ENCODE measurements at regions of chr7 and their contacts with region 1.

Region 1: GRCh38 chr7:151232091-151232916 is at the start of gene CHPF2:
- DNase-seq: peak; percentile 87 to 97 (median 94)
- H3K4me3 ChIP-seq: peak within 1 kb of the TSS; percentile 50 to 100 (median 94)
- H3K27ac ChIP-seq: peak within 1 kb of the TSS; percentile 36 to 95 (median 86)
- H3K27me3 ChIP-seq: no peaks in the 10 kb centered on the region
- CTCF ChIP-seq: peak in 22 of 56 donors; percentile 5 to 50 (median 30)
- total RNA-seq, gene CHPF2: 23.2 to 51.4 (median 35.6) TPM

Region 2: DNA sequence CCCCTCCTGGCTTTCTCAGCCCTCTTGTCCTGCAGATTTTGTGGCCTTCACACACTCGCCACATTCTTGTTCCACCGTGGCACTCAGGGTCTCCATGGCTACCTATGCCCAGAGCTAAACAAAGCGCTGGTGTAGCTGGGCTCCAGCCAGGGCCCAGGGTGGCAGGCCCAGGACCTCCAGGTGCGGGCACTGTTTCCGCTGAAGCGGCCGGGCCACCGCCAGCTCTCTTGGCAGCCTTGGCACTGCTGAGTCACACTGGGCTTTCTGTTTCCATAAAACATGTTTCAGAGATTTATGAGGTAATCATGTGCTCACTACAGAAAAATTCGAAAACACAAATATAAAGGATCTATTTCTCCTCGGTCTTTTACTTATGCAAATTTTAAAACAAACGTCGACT is 328.7 kb before region 1 on chr7:
- intact Hi-C with region 1: no loop called
- DNase-seq: peak in 8 of 10 donors; percentile 52 to 84 (median 64)
- H3K4me3 ChIP-seq: peak overlapping the region in 2 of 59 donors; percentile 1 to 2
- H3K27ac ChIP-seq: peak overlapping the region in 34 of 59 donors; percentile 4 to 80 (median 38)
- H3K27me3 ChIP-seq: peaks cover 0 to 9% (median 0%) of the 10 kb centered on the region in 45 donors
- CTCF ChIP-seq: peak in 3 of 56 donors; percentile 8 to 17 (median 14)

Region 3: DNA sequence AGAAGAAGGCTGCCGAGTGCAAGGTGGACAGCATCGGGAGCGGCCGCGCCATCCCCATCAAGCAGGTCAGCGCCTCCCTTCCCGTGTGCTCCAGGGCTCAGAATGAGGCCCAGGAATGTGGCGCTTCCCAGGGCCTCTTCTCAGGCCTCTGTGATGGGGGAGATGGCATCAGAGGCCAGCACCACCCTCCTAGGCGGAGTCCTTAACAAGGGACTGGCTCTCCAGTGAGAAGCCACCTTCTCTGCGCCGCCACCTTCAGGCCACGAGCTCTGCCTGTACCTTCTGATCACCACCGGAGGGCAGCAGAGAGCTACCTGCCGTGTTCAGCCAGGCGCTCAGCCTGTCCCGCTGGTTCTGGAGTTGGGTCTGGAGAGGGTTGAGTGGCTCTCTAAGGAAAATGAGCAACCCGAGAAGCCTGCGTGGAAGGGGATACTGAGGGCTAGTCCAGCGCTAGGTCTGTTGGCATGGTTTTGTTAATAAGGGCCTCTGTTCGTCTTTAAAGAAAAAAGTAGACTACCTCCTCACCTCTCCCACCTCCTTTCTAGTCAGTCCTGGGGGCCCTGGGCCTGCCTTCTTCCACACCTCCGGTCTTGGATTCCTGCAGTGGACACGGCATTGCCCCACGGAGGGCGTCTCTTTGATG is 108.4 kb before region 1 on chr7:
- intact Hi-C with region 1: loop called in 1 of 2 experiments (anchors 5 kb)
- DNase-seq: peak; percentile 73 to 93 (median 86)
- H3K4me3 ChIP-seq: no peak overlapping the region
- H3K27ac ChIP-seq: peak overlapping the region in 14 of 59 donors; percentile 4 to 55 (median 22)
- H3K27me3 ChIP-seq: no peaks in the 10 kb centered on the region
- CTCF ChIP-seq: peak; percentile 83 to 100 (median 99)

Region 4: GRCh38 chr7:151341357-151342101 is 109.2 kb after region 1 on chr7 and contains the start of gene NUB1:
- intact Hi-C with region 1: loop called in 1 of 2 experiments (anchors 5 kb)
- DNase-seq: peak; percentile 84 to 96 (median 90)
- H3K4me3 ChIP-seq: peak within 1 kb of the TSS; percentile 62 to 99 (median 89)
- H3K27ac ChIP-seq: peak within 1 kb of the TSS in 55 of 59 donors; percentile 32 to 92 (median 73)
- H3K27me3 ChIP-seq: no peaks in the 10 kb centered on the region
- CTCF ChIP-seq: peak in 26 of 56 donors; percentile 12 to 61 (median 32)
- total RNA-seq, gene NUB1: 34.9 to 62.3 (median 46.5) TPM

Measured in dorsolateral prefrontal cortex (tissue), 120 donors.